ENCODE measurements at regions of chr17 and their contacts with region 1.

Region 1: GRCh38 chr17:35119368-35120165 is at the start of gene RAD51D:
- DNase-seq: peak; percentile 76
- H3K4me3 ChIP-seq: peak within 1 kb of the TSS; percentile 61 to 87 (median 74)
- H3K27ac ChIP-seq: peak within 1 kb of the TSS; percentile 69 to 82 (median 78)
- H3K4me1 ChIP-seq: peaks cover 9 to 20% (median 14%) of the 10 kb centered on the region in 4 donors
- H3K27me3 ChIP-seq: no peaks in the 10 kb centered on the region
- CTCF ChIP-seq: peak; percentile 70 to 95 (median 88)
- EP300 ChIP-seq: no peak
- POLR2A ChIP-seq: peak; percentile 14
- total RNA-seq, gene RAD51D: 5.6 to 60.3 (median 7.8) TPM

Region 2: GRCh38 chr17:34420254-34420766 is 699.3 kb before region 1 on chr17:
- in situ Hi-C with region 1: loop called in 3 of 4 experiments (anchors 5 to 25 kb)
- intact Hi-C with region 1: loop called (anchors 10 kb)
- DNase-seq: peak; percentile 67
- H3K4me3 ChIP-seq: no peak overlapping the region
- H3K27ac ChIP-seq: no peak overlapping the region
- H3K4me1 ChIP-seq: peaks cover 0 to 3% (median 0%) of the 10 kb centered on the region in 4 donors
- H3K27me3 ChIP-seq: peaks cover 49% of the 10 kb centered on the region
- CTCF ChIP-seq: peak; percentile 84 to 97 (median 95)
- EP300 ChIP-seq: no peak
- POLR2A ChIP-seq: no peak

Region 3: DNA sequence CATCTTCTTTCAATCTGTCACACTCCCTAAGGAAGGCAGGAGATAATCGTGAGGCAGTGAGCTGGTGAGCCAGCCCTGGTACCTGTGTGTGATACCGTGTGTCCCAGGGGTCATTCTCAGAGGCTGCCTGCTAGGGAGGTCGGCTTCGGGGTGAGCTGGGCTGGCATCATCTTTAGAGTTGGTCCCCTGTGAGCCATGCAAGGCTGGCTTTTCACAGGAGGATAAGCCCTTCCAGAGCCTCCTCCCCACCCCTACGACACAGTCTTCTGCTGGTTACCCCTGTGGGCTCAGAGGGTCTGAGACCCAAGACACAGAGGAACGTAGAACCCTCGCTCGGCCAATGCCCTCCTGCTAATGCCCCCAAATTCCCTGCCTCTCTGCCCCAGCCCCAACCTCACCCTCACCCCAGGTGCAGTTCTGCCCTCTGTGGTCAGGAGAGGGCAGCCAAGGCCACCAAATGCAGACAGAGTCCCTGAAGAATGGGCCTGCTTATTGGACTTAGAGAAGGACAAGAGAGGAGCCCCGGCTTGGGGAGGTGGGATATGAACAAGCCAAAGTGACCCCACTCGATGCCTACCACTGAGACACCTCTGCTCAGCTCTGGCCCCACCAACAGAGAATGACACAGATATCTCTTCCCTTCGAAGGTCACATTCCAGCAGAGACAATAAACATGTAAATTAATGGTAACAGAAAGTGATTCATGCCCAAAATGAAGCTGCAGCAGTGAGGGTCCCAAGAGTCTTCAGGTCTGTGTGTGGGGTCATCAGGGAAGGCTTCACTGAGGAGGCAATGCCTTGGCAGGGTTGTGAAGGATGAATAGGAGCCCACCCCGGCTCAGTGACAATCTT is 675.7 kb before region 1 on chr17:
- in situ Hi-C with region 1: loop called in 1 of 4 experiments (anchors 25 kb)
- intact Hi-C with region 1: no loop called
- DNase-seq: no peak
- H3K4me3 ChIP-seq: no peak overlapping the region
- H3K27ac ChIP-seq: no peak overlapping the region
- H3K4me1 ChIP-seq: no peaks in the 10 kb centered on the region
- H3K27me3 ChIP-seq: peaks cover 16% of the 10 kb centered on the region
- CTCF ChIP-seq: no peak
- EP300 ChIP-seq: no peak
- POLR2A ChIP-seq: no peak

Region 4: DNA sequence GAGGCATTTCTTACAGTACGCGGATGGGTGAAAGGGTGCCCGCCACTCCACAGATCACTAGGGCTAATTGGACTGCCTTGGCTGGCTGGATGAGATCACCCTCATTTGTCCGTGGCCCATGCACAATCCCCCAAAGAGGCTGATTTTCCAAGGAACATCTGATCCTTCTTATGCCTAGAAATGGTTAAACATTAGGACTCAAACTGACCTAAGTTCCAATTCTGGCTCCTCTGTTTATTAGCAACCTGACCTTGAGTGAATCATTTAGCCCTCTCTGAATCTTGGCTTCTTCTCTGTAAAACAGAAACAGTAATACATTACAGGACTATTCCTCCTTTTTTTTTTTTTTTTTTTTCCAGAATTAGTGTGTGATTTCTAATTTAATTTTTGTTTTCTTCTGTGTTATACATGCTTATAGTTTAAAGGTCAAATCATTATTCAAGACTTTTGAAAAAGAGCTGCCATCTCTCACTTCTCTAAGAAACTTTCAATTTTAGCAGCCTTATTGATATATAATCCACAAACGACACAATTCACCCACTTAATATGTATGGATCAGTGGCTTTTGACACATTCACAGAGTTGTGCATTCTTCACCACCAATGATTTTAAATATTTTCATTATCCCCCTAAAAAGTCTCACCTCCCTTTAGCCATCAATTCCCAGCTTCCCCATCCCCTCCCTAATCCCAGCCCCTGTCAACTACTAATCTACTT is 585.6 kb before region 1 on chr17:
- in situ Hi-C with region 1: loop called in 3 of 4 experiments (anchors 10 to 25 kb)
- intact Hi-C with region 1: no loop called
- DNase-seq: no peak
- H3K4me3 ChIP-seq: no peak overlapping the region
- H3K27ac ChIP-seq: no peak overlapping the region
- H3K4me1 ChIP-seq: no peaks in the 10 kb centered on the region
- H3K27me3 ChIP-seq: peaks cover 2% of the 10 kb centered on the region
- CTCF ChIP-seq: no peak
- EP300 ChIP-seq: no peak
- POLR2A ChIP-seq: no peak

Region 5: GRCh38 chr17:34542700-34543336 is 576.7 kb before region 1 on chr17:
- in situ Hi-C with region 1: loop called in 3 of 4 experiments (anchors 10 to 25 kb)
- intact Hi-C with region 1: loop called (anchors 2 kb)
- DNase-seq: peak; percentile 25
- H3K4me3 ChIP-seq: no peak overlapping the region
- H3K27ac ChIP-seq: no peak overlapping the region
- H3K4me1 ChIP-seq: no peaks in the 10 kb centered on the region
- H3K27me3 ChIP-seq: peaks cover 24% of the 10 kb centered on the region
- CTCF ChIP-seq: peak; percentile 65 to 77 (median 75)
- EP300 ChIP-seq: no peak
- POLR2A ChIP-seq: no peak

Region 6: GRCh38 chr17:34665150-34665806 is 454.3 kb before region 1 on chr17:
- in situ Hi-C with region 1: loop called in 1 of 4 experiments (anchors 25 kb)
- intact Hi-C with region 1: no loop called
- DNase-seq: no peak
- H3K4me3 ChIP-seq: no peak overlapping the region
- H3K27ac ChIP-seq: no peak overlapping the region
- H3K4me1 ChIP-seq: no peaks in the 10 kb centered on the region
- H3K27me3 ChIP-seq: peaks cover 29% of the 10 kb centered on the region
- CTCF ChIP-seq: no peak
- EP300 ChIP-seq: no peak
- POLR2A ChIP-seq: no peak

Region 7: GRCh38 chr17:35011671-35012210 is 107.8 kb before region 1 on chr17:
- in situ Hi-C with region 1: no loop called
- intact Hi-C with region 1: no loop called
- DNase-seq: no peak
- H3K4me3 ChIP-seq: no peak overlapping the region
- H3K27ac ChIP-seq: no peak overlapping the region
- H3K4me1 ChIP-seq: no peaks in the 10 kb centered on the region
- H3K27me3 ChIP-seq: no peaks in the 10 kb centered on the region
- CTCF ChIP-seq: no peak
- EP300 ChIP-seq: no peak
- POLR2A ChIP-seq: no peak

Region 8: GRCh38 chr17:35244342-35245195 is 125.0 kb after region 1 on chr17:
- in situ Hi-C with region 1: no loop called
- intact Hi-C with region 1: no loop called
- DNase-seq: peak; percentile 68
- H3K4me3 ChIP-seq: peak overlapping the region in 3 of 4 donors; percentile 46 to 73 (median 53)
- H3K27ac ChIP-seq: peak overlapping the region; percentile 92 to 96 (median 94)
- H3K4me1 ChIP-seq: peaks cover 5 to 35% (median 12%) of the 10 kb centered on the region in 4 donors
- H3K27me3 ChIP-seq: peaks cover 15% of the 10 kb centered on the region
- CTCF ChIP-seq: no peak
- EP300 ChIP-seq: no peak
- POLR2A ChIP-seq: peak; percentile 36